ENCODE measurements at regions of chr19 and their contacts with region 1.

Region 1: DNA sequence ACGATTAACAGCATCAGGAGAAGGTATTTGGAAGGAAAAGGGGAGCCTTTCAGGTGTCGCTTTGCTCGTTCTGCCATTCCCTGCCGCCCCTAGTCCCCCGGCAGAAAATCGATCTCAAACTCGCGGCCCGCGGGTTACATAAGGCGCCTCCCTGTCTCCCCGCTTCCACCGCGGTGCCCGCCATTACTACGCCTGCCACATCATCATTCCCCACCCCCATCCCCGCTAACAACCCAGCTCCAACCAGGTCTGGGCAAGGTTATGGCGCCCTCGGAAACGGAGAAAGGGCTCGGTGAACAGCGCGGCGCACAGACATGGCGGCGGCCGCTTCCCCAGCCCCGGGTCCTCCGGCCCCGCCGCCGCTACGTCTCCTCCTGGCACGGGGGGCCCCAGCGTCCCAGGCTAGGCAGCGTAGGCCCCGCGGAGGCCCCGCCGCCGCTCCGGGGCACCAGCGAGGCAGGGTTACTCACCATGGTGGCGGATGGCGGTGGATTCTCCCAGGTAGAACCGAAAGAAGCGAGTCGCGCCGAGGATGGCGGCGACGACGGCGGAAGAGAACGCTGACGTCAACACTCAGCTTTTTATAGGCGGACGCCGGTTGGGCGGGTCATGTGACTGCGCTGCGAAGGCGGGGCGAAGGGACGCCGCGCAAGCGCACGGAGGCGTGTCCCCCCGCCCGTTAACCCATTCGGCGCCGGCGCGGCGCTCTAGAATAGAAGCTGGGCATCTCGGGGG is at the start of gene EEF2:
- DNase-seq: peak; percentile 88 to 96 (median 95)
- H3K4me3 ChIP-seq: peak within 1 kb of the TSS; percentile 84
- H3K27ac ChIP-seq: peak within 1 kb of the TSS; percentile 74 to 88
- H3K4me1 ChIP-seq: peaks cover 4% of the 10 kb centered on the region
- H3K27me3 ChIP-seq: no peaks in the 10 kb centered on the region
- CTCF ChIP-seq: peak in 2 of 3 donors; percentile 27 to 32
- EP300 ChIP-seq: no peak
- POLR2A ChIP-seq: peak; percentile 100
- total RNA-seq, gene EEF2: 1,491 to 4,634 (median 4,119) TPM

Region 2: DNA sequence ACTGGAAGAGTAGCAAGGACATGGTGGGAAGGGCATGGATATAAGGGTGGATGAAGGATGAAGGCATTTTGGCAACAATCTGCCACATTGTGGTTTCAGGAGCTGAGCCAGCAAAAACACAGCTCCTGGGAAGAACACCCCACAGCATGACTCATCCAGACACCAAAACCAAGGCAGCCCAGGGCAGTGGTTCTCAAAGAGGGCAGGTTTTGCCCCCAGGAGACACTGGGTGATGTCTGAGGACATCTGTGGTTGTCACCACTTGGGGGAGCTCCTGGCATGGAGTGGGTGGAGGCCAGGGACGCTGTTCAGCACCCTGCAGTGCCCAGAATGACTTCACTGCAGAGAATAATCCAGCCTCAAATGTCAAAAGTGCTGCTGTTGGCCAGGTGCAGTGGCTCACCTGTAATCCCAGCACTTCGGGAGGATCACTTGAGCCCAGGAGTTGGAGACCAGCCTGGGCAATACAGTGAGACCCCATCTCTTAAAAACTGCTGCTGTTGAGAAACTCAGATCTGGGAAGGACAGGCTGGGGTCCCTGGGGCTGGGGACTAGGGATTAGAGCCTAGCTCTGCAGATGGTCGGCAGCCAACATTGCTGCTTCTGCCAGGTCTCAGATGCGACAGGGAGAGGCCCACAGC is 132.3 kb before region 1 on chr19:
- intact Hi-C with region 1: no loop called
- DNase-seq: no peak
- H3K4me3 ChIP-seq: no peak overlapping the region
- H3K27ac ChIP-seq: no peak overlapping the region
- H3K4me1 ChIP-seq: no peaks in the 10 kb centered on the region
- H3K27me3 ChIP-seq: no peaks in the 10 kb centered on the region
- CTCF ChIP-seq: no peak
- EP300 ChIP-seq: no peak
- POLR2A ChIP-seq: no peak

Region 3: DNA sequence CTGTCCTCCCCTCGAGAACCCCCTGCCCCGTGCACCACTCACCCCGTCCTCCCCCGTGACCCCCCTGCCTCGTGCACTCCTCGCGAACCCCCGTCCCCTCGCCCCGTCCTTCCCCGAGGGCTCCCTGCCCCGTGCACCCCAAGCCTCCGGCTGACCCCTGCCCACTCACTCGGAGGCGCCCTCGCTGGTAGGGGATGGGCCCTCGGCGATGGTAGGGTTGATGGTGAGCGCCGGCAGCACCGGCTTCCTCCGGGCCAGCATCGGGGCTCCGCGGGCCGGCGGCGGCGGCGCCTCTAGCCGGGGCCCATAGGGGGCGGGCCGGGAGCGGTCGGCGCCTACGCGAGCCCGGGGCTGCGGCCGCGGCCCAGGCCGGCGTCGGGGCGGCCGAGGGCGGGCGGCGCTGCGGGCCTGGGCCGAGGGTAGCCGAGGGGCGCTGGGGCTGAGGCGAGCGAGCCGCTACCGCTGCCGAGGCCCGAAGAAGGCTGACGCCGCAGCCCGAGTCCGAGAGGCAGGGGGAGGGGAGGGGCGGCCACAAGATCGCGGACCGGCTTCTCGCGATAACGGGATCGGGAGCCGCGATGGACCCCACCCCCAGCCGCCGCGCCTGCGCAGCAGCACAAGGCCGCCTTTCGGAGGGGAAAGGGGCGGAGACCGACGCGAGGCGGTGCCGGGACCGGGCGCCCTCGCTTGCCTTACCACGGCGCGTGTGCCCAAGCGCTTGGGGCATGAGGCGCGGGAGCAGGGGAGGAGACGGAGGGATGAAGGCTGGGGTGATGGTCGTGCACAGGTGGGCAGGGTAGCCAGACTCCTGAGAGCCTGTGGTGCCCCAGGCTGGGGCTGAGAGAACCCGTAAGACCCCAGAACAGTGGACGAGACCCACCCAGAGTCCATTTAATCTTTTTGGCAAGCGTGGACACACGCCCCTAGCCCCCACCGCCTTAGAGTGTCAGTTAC is 138.8 kb after region 1 on chr19 and contains the start of gene MAP2K2:
- intact Hi-C with region 1: loop called in 1 of 4 experiments (anchors 10 kb)
- DNase-seq: peak; percentile 95 to 98 (median 97)
- H3K4me3 ChIP-seq: peak within 1 kb of the TSS; percentile 99
- H3K27ac ChIP-seq: peak within 1 kb of the TSS; percentile 22 to 57
- H3K4me1 ChIP-seq: peaks cover 14% of the 10 kb centered on the region
- H3K27me3 ChIP-seq: no peaks in the 10 kb centered on the region
- CTCF ChIP-seq: peak in 1 of 3 donors; percentile 19
- EP300 ChIP-seq: no peak
- POLR2A ChIP-seq: peak; percentile 24
- total RNA-seq, gene MAP2K2: 39.9 to 130 (median 116) TPM

Region 4: GRCh38 chr19:4139614-4140236 is 154.7 kb after region 1 on chr19:
- intact Hi-C with region 1: loop called in 1 of 4 experiments (anchors 5 kb)
- DNase-seq: peak; percentile 47 to 80 (median 70)
- H3K4me3 ChIP-seq: no peak overlapping the region
- H3K27ac ChIP-seq: no peak overlapping the region
- H3K4me1 ChIP-seq: no peaks in the 10 kb centered on the region
- H3K27me3 ChIP-seq: no peaks in the 10 kb centered on the region
- CTCF ChIP-seq: peak in 2 of 3 donors; percentile 39 to 50
- EP300 ChIP-seq: no peak
- POLR2A ChIP-seq: no peak

Region 5: GRCh38 chr19:4208385-4209094 is 223.5 kb after region 1 on chr19:
- intact Hi-C with region 1: loop called in 1 of 4 experiments (anchors 10 kb)
- DNase-seq: no peak
- H3K4me3 ChIP-seq: no peak overlapping the region
- H3K27ac ChIP-seq: no peak overlapping the region
- H3K4me1 ChIP-seq: no peaks in the 10 kb centered on the region
- H3K27me3 ChIP-seq: no peaks in the 10 kb centered on the region
- CTCF ChIP-seq: no peak
- EP300 ChIP-seq: no peak
- POLR2A ChIP-seq: no peak

Region 6: DNA sequence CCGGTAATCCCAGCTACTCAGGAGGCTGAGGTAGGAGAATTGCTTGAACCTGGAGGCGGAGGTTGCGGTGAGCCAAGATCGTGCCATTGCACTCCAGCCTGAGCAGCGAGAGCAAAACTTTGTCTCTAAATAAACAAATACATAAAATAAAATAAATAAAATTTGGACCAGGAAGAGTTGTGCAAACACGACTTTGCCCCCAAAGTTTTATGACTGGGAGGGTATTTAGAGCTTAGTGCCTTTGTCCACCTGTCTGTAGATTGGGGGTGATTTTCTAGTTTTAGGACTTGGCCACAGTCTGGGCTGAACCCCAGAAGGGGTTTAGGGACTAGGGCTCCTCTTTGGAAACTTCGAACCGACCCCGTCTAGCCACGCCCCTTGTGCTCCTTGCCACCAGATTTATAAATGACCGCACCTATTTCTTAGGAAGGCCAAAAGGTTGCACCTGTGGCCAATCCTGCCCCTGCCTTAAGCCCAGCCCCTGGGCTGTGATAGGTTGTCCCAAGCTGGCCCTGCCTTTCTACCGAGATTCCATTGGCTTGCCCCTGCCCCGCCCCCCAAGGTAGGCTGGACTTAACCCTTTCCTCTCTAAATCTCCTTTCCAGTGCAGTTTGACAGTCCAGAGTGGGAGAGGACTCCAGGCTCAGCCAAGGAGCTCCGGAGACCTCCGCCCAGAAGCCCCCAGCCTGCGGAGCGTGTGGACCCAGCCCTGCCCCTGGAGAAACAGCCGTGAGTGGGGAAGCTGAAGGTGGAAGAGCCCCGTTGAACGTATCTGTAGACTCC is 299.3 kb after region 1 on chr19:
- intact Hi-C with region 1: no loop called
- DNase-seq: no peak
- H3K4me3 ChIP-seq: no peak overlapping the region
- H3K27ac ChIP-seq: no peak overlapping the region
- H3K4me1 ChIP-seq: peaks cover 3% of the 10 kb centered on the region
- H3K27me3 ChIP-seq: no peaks in the 10 kb centered on the region
- CTCF ChIP-seq: no peak
- EP300 ChIP-seq: no peak
- POLR2A ChIP-seq: no peak

Measured in ovary (tissue), 10 donors.